Adrenal gland (tissue), 19 donors: ENCODE measurements at regions of chr2 and their contacts with region 1.

Region 1: GRCh38 chr2:10400568-10400977 is 47.6 kb downstream of the ODC1 start:
- DNase-seq: peak in 6 of 7 donors; percentile 47 to 69 (median 53)
- H3K4me3 ChIP-seq: no peak overlapping the region
- H3K27ac ChIP-seq: peak overlapping the region in 3 of 5 donors; percentile 34 to 73 (median 67)
- H3K4me1 ChIP-seq: peaks cover 16 to 36% of the 10 kb centered on the region in 2 donors
- H3K27me3 ChIP-seq: no peaks in the 10 kb centered on the region
- CTCF ChIP-seq: no peak
- POLR2A ChIP-seq: no peak

Region 2: DNA sequence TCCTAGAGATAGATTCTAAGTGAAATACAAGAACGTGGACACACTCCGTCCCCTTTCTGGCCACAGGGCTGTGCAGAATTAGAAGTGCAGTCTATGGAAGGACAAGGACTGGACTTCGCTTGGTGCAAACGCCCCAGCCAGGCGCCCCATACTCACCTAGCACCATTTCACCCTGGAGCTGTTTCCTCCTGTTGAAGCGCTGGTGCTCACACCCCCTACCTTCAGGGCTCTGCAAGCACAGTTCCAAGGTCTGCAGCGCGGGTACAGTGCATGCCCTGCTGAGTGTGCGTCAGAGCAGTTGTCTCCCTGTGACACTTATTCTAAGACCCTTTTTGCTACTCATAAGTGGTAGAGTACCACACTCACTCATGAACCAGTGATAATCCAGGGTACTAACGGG is 94.9 kb before region 1 on chr2:
- intact Hi-C with region 1: loop called in 1 of 2 experiments (anchors 5 kb)
- DNase-seq: peak; percentile 60 to 82 (median 71)
- H3K4me3 ChIP-seq: peak overlapping the region in 1 of 4 donors; percentile 79
- H3K27ac ChIP-seq: peak overlapping the region in 4 of 5 donors; percentile 10 to 87 (median 70)
- H3K4me1 ChIP-seq: peaks cover 46 to 55% of the 10 kb centered on the region in 2 donors
- H3K27me3 ChIP-seq: no peaks in the 10 kb centered on the region
- CTCF ChIP-seq: peak; percentile 16 to 53 (median 38)
- POLR2A ChIP-seq: peak in 1 of 2 donors; percentile 45